Cardiac septum (tissue), 1 donor: ENCODE measurements at regions of chr6 and their contacts with region 1.

Region 1: DNA sequence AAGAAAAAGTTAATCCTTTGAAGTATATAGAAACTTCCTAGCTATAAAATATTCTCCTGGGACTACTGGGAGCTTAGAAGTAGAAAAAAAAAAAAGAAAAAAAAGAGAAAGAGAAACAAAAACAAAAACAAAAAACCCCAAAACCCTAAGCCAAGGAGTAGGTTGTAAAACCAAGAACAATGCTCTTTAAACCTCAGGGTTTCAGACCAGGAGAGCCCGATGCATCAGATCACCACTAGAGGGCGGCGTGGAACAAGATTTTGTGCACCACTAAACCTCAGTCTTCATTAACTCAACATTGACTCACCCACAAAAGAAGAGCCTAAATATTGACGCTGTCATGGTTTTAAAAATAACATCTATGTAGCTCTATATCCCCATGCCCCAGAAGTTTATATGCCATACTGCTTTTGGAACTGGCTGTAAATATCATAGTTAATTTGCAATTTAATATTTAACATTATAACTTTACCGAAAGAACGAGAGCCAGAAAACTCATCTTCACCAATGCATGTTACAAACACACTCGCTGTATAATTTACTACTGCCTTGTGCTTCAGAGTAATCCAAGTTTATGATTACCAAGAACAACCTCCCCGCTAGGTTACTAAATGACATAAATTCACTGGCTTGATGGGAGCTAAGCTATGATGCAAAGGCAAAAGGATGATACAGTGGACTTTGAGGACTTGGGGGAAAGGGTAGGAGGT is 19.2 kb downstream of the MCUR1 start:
- DNase-seq: peak; percentile 84

Region 2: DNA sequence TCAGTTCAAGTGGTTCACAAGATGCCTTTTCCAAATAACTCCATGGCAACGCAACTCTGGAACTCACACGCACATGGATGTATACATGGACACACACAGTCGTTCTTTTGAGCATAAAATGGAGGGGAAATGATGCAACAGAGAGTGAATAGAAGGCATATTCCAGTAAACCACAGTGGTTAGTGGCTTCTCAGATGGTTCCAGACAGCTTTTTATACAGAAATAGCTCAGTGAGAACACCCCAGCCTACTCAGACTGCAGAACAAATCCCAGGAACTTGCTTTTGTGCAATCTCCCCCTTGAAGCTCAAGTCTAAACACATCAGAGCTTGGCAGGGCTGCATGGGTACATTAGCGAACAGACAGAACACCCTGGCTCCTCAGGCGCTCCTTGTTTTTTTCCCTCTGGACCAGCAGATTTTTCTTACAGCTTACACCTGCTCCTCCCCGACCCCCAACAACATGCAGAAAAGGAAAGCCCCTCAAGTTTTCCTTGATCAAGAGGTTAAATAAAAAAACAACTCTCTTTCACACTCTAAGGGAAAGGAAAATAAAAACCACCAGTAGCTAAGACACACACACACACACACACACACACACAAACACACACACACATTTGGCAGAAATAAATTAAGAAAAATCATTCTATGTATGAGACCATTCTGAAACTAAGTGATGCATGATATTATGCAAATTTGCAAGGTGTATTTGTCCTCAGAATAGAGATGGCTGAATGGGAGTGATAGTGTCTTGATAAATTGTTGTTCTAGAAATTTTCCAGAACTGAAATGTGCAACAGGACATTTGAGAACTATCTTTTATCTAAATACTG is 32.4 kb before region 1 on chr6:
- intact Hi-C with region 1: no loop called
- DNase-seq: peak; percentile 71

Region 3: GRCh38 chr6:14066782-14067406 is 271.7 kb after region 1 on chr6:
- intact Hi-C with region 1: loop called (anchors 5 kb)
- DNase-seq: no peak